Activated CD4-positive, alpha-beta T cell treated with anti-CD3 and anti-CD28 coated beads for 36 hours (primary cell): ENCODE measurements at regions of chr3 and their contacts with region 1.

Region 1: DNA sequence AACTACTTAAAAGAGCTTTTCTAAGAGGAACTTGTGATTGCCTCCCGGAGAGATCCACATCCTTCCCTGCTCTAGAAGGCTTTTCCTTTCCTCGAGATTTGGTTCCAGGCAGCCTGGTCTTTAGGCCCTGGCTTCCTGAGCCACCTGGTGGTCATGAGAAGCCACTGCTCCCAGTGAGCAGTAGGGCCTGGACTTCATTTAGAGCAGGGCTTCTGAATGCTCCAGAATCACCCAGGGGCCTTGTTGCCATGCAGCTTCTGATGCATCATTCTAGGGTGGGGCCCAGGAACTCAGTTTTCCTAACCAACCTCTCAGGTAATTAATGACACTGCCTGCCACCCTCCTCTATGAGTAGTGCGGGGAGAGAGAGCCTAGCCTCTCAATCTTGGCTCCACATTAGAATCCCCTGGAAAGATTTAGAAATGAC is 29.6 kb downstream of the PSMD6 start:
- DNase-seq: peak; percentile 67
- ATAC-seq: peak; percentile 91
- H3K4me3 Mint-ChIP-seq: no peak overlapping the region
- H3K27ac Mint-ChIP-seq: no peak overlapping the region
- H3K4me1 Mint-ChIP-seq: peaks cover 24% of the 10 kb centered on the region
- H3K27me3 Mint-ChIP-seq: no peaks in the 10 kb centered on the region

Region 2: GRCh38 chr3:63961891-63962290 is 31.8 kb before region 1 on chr3:
- CTCF ChIA-PET with region 1: interaction called, 38 read pairs
- POLR2A ChIA-PET with region 1: no interaction called
- intact Hi-C with region 1: loop called (anchors 1 kb)
- DNase-seq: no peak
- ATAC-seq: peak; percentile 74
- H3K4me3 Mint-ChIP-seq: no peak overlapping the region
- H3K27ac Mint-ChIP-seq: no peak overlapping the region
- H3K4me1 Mint-ChIP-seq: peaks cover 50% of the 10 kb centered on the region
- H3K27me3 Mint-ChIP-seq: no peaks in the 10 kb centered on the region

Region 3: GRCh38 chr3:63967675-63968611 is 25.7 kb before region 1 on chr3:
- CTCF ChIA-PET with region 1: interaction called, 38 read pairs
- POLR2A ChIA-PET with region 1: no interaction called
- intact Hi-C with region 1: no loop called
- DNase-seq: peak; percentile 54
- ATAC-seq: peak; percentile 50
- H3K4me3 Mint-ChIP-seq: peak overlapping the region; percentile 75
- H3K27ac Mint-ChIP-seq: peak overlapping the region; percentile 89
- H3K4me1 Mint-ChIP-seq: peaks cover 80% of the 10 kb centered on the region
- H3K27me3 Mint-ChIP-seq: no peaks in the 10 kb centered on the region

Region 4: DNA sequence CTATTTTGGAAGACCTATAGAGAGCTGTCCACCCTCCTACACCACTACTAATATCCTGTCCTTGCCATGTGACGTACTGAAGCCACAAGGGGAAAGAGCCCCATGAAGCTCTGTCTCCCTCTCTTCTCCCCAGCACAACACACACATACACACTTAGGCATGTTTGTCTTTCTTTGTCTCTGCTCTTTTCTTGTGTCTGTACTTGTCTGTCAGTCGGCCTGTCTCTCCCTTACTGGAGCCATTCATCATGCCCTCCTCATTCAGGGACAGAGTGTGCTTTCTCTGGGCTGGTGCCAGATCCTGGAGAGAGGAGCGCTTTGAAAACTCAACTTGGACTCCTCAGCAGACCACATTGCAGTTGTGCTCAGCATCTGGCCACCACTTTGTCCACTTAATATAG is 17.9 kb before region 1 on chr3:
- CTCF ChIA-PET with region 1: interaction called, 79 read pairs
- POLR2A ChIA-PET with region 1: no interaction called
- intact Hi-C with region 1: no loop called
- DNase-seq: no peak
- ATAC-seq: no peak
- H3K4me3 Mint-ChIP-seq: no peak overlapping the region
- H3K27ac Mint-ChIP-seq: peak overlapping the region; percentile 97
- H3K4me1 Mint-ChIP-seq: peaks cover 95% of the 10 kb centered on the region
- H3K27me3 Mint-ChIP-seq: no peaks in the 10 kb centered on the region

Region 5: DNA sequence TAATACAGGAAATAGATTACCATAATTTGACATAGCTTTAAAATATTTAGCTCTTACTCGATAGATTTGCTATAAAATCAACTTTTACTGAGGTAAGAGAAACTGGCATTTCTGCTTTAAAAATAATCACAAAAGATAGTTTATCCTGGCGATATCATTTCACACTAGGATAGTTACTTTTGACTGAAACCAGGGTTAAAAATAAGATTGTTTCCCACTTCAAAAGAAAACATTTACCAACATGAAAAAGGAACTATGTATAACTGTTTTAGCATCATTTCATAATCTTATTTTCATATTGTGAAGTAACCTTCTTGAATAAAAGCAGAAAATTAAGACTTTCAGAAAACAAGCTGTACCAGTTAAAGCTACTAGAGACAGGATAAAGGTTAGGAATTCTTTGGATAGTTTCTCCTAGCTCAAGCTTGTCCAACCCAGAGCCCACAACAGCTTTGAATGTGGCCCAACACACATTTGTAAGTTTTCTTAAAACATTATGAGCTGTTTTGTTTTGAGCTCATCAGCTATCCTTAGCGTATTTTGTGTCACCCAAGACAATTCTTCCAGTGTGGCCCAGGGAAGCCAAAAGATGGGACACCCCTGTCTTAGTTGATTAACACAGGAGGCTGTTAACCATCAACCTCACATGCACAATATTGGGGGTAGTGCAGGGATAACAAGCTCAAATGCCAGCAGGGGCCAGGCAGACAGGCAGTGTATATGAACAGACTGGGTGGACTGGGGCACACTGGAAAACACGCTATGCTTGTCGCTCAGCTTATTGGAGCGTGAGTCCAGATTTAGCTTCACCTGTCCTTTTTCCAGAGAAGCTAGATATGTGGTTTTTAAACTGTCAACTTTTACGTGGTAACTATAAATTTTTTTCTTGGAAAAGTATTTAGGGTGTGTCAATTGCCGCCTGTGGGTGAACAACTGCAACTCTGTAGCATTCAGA is 14.6 kb after region 1 on chr3:
- CTCF ChIA-PET with region 1: interaction called, 25 read pairs
- POLR2A ChIA-PET with region 1: interaction called, 3 read pairs
- intact Hi-C with region 1: no loop called
- DNase-seq: no peak
- ATAC-seq: no peak
- H3K4me3 Mint-ChIP-seq: no peak overlapping the region
- H3K27ac Mint-ChIP-seq: no peak overlapping the region
- H3K4me1 Mint-ChIP-seq: peaks cover 15% of the 10 kb centered on the region
- H3K27me3 Mint-ChIP-seq: no peaks in the 10 kb centered on the region